ENCODE measurements at regions of chr16 and their contacts with region 1.

Region 1: DNA sequence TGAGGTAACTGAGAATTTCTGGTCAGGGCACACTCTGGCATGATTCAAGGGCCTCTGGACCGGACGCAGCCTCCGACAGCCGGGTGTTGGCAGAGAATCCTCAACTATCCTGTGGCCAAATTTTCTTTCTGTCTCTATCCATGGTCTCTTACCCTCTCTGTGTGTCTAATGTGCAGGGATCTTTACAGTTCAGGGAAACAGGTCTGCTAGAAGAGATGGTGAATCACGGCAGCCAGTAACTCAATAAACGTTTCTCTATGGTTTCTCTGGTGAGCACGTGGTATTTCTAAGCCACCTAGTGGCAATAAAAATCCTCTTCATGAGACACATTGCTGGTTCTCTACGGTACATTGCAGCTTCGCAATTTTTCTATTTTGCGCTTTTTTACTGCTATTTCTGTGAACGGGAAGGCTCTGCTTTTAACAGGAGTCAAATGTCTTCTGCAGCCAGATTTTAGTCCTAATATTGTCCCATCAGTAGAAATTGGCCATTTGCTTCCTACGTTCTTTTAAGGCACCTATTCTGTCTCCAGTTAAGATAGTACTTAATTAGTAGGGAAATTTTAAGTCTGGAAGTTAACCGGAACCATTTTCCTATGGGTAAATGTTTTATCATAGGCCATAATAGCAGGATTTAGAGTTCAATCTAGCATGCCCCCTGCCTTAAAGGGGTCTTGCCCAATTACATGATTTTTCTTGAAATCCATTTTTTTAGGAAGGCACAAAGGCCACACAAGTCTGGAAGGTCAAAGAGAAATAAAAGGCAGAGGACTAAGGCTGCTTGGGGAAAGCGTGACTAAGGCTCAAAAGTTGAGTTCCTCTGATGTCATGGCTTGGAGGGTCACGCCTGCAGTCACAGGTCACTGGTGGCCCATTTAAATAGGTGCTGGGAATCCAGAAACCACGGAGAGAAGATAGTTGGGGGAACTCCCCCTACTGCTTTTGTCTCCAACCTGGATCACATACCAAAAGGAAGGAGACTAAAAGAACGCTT is 31.5 kb downstream of the QPRT start:
- DNase-seq: peak; percentile 44 to 59
- H3K4me3 ChIP-seq: no peak overlapping the region; the same call in 1 of the 2 replicates
- H3K27ac ChIP-seq: no peak overlapping the region
- H3K4me1 ChIP-seq: no peaks in the 10 kb centered on the region
- H3K27me3 ChIP-seq: no peaks in the 10 kb centered on the region
- CTCF ChIP-seq: peak; percentile 74

Region 2: GRCh38 chr16:29662729-29663015 is 47.9 kb before region 1 on chr16:
- CTCF ChIA-PET with region 1: no interaction called
- POLR2A ChIA-PET with region 1: interaction called, 26 read pairs
- intact Hi-C with region 1: no loop called
- DNase-seq: no peak
- H3K4me3 ChIP-seq: no peak overlapping the region
- H3K27ac ChIP-seq: no peak overlapping the region
- H3K4me1 ChIP-seq: no peaks in the 10 kb centered on the region
- H3K27me3 ChIP-seq: no peaks in the 10 kb centered on the region
- CTCF ChIP-seq: no peak

Region 3: DNA sequence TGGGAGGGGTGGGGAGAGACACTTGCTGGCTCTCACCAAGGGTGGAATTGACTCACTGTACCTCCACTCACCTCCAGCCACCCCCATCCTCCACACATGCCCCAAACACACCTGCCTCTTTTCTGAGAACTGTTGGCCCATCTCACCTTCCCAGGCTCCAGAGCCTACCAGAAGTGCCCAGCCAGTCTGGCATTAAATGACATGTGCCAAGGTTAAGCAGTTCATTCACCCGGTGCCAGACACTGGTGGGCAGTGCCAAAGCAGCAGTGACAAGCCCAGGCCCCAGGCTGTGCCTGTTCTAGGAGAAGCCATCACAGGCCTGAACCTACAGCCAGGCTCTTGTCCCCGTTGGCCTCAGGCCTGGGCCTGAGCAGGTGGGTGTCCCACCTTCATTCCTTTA is 121.0 kb after region 1 on chr16:
- CTCF ChIA-PET with region 1: no interaction called
- POLR2A ChIA-PET with region 1: interaction called, 22 read pairs
- intact Hi-C with region 1: no loop called
- DNase-seq: no peak
- H3K4me3 ChIP-seq: no peak overlapping the region
- H3K27ac ChIP-seq: no peak overlapping the region
- H3K4me1 ChIP-seq: no peaks in the 10 kb centered on the region
- H3K27me3 ChIP-seq: no peaks in the 10 kb centered on the region
- CTCF ChIP-seq: no peak

Measured in PC-9 (cell line).